Activated CD8-positive, alpha-beta T cell treated with anti-CD3 and anti-CD28 coated beads, Interleukin-2, amount 10 ng/mL, durations not matched to agents 7 days and 5 days (primary cell): ENCODE measurements at regions of chr4 and their contacts with region 1.

Region 1: DNA sequence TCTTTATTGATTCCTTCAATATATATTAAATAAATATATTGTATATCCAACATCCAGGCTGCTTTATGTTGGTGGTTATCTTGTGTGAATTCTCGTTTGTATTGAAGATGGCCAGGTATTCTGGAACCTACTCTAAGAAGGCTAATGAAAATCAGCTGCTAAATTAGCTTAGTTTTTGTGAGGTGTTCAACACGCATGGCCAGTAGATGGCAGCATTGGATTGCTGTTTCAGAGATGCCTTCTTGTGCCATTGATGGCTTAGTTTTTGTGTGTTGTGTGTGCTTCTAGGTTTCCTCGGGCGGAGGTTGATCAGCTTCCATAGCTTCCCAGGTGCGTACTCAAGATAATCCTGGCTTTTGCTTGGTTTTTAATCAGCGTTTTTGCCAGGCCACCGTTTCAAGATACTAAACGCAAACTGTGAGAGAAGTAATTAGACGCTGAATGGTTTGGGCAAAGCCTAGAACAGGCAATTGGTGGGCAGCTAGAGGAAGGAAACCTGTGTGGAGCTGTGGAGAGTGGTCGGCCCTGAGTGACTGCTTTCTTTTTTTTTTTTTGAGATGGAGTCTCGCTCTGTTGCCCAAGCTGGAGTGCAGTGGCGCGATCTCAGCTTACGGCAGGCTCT is 15.1 kb downstream of the NOCT start:
- DNase-seq: peak; percentile 85
- ATAC-seq: peak; percentile 83
- H3K4me3 Mint-ChIP-seq: no peak overlapping the region
- H3K27ac Mint-ChIP-seq: peak overlapping the region; percentile 0
- H3K4me1 Mint-ChIP-seq: peaks cover 11% of the 10 kb centered on the region
- H3K27me3 Mint-ChIP-seq: no peaks in the 10 kb centered on the region

Region 2: GRCh38 chr4:138595731-138596460 is 434.8 kb before region 1 on chr4:
- CTCF ChIA-PET with region 1: no interaction called
- POLR2A ChIA-PET with region 1: no interaction called
- DNase-seq: no peak
- ATAC-seq: no peak
- H3K4me3 Mint-ChIP-seq: no peak overlapping the region
- H3K27ac Mint-ChIP-seq: no peak overlapping the region
- H3K4me1 Mint-ChIP-seq: no peaks in the 10 kb centered on the region
- H3K27me3 Mint-ChIP-seq: no peaks in the 10 kb centered on the region

Region 3: GRCh38 chr4:138952411-138952810 is 78.3 kb before region 1 on chr4:
- CTCF ChIA-PET with region 1: no interaction called
- POLR2A ChIA-PET with region 1: no interaction called
- DNase-seq: no peak
- ATAC-seq: no peak
- H3K4me3 Mint-ChIP-seq: no peak overlapping the region
- H3K27ac Mint-ChIP-seq: no peak overlapping the region
- H3K4me1 Mint-ChIP-seq: no peaks in the 10 kb centered on the region
- H3K27me3 Mint-ChIP-seq: peaks cover 10% of the 10 kb centered on the region

Region 4: DNA sequence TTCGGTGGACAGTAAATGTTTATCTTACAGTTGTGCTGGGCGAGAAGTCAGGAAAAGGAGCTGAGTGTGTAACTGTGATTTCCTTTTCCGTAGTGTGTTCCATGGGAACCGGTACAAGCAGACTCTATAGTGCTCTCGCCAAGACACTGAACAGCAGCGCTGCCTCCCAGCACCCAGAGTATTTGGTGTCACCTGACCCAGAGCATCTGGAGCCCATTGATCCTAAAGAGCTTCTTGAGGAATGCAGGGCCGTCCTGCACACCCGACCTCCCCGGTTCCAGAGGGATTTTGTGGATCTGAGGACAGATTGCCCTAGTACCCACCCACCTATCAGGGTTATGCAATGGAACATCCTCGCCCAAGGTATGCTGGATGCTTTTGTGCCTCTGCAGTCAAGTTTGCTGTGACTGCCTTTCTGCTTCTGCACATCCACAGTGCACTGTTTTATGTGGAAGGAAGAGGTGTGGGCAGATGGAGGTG is 12.3 kb after region 1 on chr4:
- CTCF ChIA-PET with region 1: interaction called, 48 read pairs
- POLR2A ChIA-PET with region 1: no interaction called
- DNase-seq: no peak
- ATAC-seq: no peak
- H3K4me3 Mint-ChIP-seq: no peak overlapping the region
- H3K27ac Mint-ChIP-seq: no peak overlapping the region
- H3K4me1 Mint-ChIP-seq: peaks cover 9% of the 10 kb centered on the region
- H3K27me3 Mint-ChIP-seq: no peaks in the 10 kb centered on the region

Region 5: DNA sequence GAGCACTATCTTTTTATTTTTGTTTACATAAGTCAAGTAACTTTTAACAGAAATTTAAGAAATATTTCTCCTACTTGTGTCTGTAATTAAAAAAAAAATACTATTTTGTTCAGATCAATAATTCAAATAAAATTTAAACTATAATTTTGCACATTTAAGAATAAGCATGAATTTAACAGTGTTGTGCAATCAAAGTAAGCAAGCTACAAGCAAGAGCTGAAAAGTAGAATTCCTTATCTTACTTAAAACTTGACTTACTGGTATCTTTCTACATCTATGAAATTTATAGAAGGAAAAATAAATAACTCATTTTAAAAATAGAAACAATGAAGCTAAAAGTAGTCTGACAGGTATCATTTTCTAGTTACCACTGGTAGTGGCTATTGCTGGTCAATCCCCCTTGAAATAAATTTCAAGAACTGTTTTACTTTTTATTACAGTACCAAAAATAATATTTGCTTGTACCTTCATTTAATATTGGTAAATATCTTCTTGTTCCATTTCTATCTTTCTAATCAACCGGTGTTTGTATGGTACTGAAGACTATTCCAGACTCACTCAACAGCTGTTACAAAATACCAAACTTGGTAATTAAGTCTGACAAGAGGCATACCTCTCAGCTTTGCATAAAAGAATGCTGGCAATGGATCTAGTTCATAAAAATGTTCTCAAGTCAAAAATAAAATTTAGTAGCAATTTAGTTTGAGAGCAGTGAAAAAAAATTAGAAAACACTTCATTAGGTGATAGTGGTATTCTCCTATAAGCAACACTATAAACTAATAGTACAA is 47.0 kb after region 1 on chr4:
- CTCF ChIA-PET with region 1: interaction called, 51 read pairs
- POLR2A ChIA-PET with region 1: interaction called, 5 read pairs
- DNase-seq: no peak
- ATAC-seq: no peak
- H3K4me3 Mint-ChIP-seq: no peak overlapping the region
- H3K27ac Mint-ChIP-seq: no peak overlapping the region
- H3K4me1 Mint-ChIP-seq: peaks cover 40% of the 10 kb centered on the region
- H3K27me3 Mint-ChIP-seq: no peaks in the 10 kb centered on the region

Region 6: DNA sequence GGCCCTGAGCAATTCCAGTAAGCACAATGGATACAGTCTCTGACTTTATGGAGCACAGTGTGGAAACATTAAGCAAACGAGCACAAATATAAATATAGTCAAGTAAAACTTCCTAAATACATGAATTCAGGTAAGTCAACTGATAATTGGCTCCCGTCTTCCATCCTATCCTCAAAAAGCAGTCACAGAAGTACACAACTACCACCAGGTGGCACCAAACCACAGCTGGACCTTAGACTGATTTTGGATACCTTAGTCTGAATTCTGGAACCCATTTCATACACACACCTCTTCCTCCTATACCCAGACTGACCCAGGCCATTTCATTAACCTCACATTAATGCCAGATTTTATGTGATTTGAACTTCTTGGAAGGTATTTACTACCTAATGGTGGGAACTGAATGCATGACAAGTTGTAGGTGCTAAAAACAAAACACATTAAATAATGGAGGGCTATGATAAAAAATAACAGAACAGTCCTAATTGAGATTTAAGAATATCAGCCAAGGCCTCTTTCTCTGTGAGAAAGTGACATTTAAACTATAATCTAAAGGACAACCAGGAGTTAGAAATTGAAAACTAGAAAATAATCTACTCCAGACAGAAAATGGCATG is 68.7 kb after region 1 on chr4:
- CTCF ChIA-PET with region 1: interaction called, 25 read pairs
- POLR2A ChIA-PET with region 1: no interaction called
- DNase-seq: peak; percentile 82
- ATAC-seq: peak; percentile 65
- H3K4me3 Mint-ChIP-seq: no peak overlapping the region
- H3K27ac Mint-ChIP-seq: no peak overlapping the region
- H3K4me1 Mint-ChIP-seq: no peaks in the 10 kb centered on the region
- H3K27me3 Mint-ChIP-seq: no peaks in the 10 kb centered on the region

Region 7: GRCh38 chr4:139223682-139224317 is 193.1 kb after region 1 on chr4:
- CTCF ChIA-PET with region 1: interaction called, 12 read pairs
- POLR2A ChIA-PET with region 1: interaction called, 3 read pairs
- DNase-seq: no peak
- ATAC-seq: no peak
- H3K4me3 Mint-ChIP-seq: no peak overlapping the region
- H3K27ac Mint-ChIP-seq: no peak overlapping the region
- H3K4me1 Mint-ChIP-seq: peaks cover 16% of the 10 kb centered on the region
- H3K27me3 Mint-ChIP-seq: no peaks in the 10 kb centered on the region

Region 8: GRCh38 chr4:139295206-139295941 is 264.6 kb after region 1 on chr4:
- CTCF ChIA-PET with region 1: interaction called, 36 read pairs
- POLR2A ChIA-PET with region 1: interaction called, 3 read pairs
- DNase-seq: peak; percentile 97
- ATAC-seq: peak; percentile 98
- H3K4me3 Mint-ChIP-seq: peak overlapping the region; percentile 94
- H3K27ac Mint-ChIP-seq: peak overlapping the region; percentile 96
- H3K4me1 Mint-ChIP-seq: peaks cover 40% of the 10 kb centered on the region
- H3K27me3 Mint-ChIP-seq: no peaks in the 10 kb centered on the region

Region 9: DNA sequence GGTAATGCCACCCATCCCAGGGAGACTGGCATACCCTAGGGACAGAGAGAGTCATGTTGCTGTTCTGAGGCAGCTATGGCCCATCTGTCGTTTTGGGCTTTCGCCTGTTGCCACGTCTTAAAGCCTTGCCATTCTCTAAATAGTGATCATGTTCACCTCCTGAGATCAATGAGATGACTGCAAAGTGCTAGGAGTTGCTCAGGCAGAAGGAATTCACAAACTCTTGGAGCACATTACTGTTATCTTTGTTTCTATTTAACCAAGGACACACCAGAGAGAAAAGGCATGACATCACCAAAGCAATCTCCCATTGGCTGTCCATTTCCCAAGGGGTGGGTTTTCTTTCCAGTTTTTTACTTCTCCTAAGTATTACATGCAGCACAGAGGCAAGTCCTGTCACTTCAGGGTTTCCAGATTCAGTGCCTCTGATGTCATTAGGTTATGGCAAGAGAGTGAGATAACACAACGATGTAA is 562.4 kb after region 1 on chr4:
- CTCF ChIA-PET with region 1: no interaction called
- POLR2A ChIA-PET with region 1: no interaction called
- DNase-seq: no peak
- ATAC-seq: no peak
- H3K4me3 Mint-ChIP-seq: no peak overlapping the region
- H3K27ac Mint-ChIP-seq: no peak overlapping the region
- H3K4me1 Mint-ChIP-seq: no peaks in the 10 kb centered on the region
- H3K27me3 Mint-ChIP-seq: peaks cover 27% of the 10 kb centered on the region